Activated naive CD4-positive, alpha-beta T cell treated with anti-CD3 and anti-CD28 coated beads for 36 hours (primary cell): ENCODE measurements at regions of chr18 and their contacts with region 1.

Region 1: GRCh38 chr18:3771121-3771971 is 321.4 kb downstream of the TGIF1 start:
- DNase-seq: peak; percentile 88
- H3K4me3 Mint-ChIP-seq: peak overlapping the region; percentile 55
- H3K27ac Mint-ChIP-seq: no peak overlapping the region
- H3K4me1 Mint-ChIP-seq: peaks cover 6% of the 10 kb centered on the region
- H3K27me3 Mint-ChIP-seq: peaks cover 28% of the 10 kb centered on the region

Region 2: DNA sequence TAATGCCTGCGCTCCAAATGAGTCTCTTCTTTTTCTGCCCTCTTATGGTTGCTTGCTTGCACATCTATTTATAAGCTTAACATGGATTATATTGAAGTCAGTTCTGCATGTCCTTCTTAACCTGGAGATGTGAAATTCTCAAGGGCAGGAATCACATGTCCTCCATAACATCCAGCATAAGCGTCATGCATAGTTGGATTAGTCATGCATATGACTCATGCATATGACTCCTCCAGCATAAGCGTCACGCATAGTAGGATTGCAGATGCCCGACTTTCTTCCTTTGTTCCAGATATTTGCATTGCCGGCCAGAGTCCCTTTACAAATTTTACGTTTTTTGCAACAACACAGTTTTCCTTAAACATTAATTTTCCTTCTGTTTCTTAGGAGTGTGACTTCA is 12.8 kb before region 1 on chr18:
- CTCF ChIA-PET with region 1: interaction called, 10 read pairs
- intact Hi-C with region 1: no loop called
- DNase-seq: no peak
- H3K4me3 Mint-ChIP-seq: no peak overlapping the region
- H3K27ac Mint-ChIP-seq: no peak overlapping the region
- H3K4me1 Mint-ChIP-seq: no peaks in the 10 kb centered on the region
- H3K27me3 Mint-ChIP-seq: peaks cover under 1% of the 10 kb centered on the region

Region 3: DNA sequence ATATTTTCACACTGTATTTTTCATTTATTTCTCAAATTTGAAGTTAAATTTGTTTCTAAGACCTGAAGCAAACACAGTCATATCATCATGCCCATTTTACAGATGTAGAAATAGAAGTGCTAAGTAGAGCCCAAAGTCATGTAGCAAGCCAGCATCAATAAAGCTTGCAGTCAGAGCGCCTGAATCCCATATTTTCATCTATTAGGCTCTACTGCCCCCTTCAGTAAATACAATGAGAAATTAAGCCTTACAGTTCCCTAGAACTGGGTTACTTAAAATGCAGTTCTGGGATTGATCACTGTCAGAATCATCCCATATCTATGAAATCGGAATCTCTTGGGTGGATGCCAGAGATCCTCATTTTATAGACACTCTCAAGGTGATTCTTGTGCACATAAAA is 98.5 kb after region 1 on chr18:
- CTCF ChIA-PET with region 1: interaction called, 31 read pairs
- intact Hi-C with region 1: loop called (anchors 1 kb)
- DNase-seq: no peak
- H3K4me3 Mint-ChIP-seq: no peak overlapping the region
- H3K27ac Mint-ChIP-seq: no peak overlapping the region
- H3K4me1 Mint-ChIP-seq: no peaks in the 10 kb centered on the region
- H3K27me3 Mint-ChIP-seq: peaks cover 16% of the 10 kb centered on the region

Region 4: DNA sequence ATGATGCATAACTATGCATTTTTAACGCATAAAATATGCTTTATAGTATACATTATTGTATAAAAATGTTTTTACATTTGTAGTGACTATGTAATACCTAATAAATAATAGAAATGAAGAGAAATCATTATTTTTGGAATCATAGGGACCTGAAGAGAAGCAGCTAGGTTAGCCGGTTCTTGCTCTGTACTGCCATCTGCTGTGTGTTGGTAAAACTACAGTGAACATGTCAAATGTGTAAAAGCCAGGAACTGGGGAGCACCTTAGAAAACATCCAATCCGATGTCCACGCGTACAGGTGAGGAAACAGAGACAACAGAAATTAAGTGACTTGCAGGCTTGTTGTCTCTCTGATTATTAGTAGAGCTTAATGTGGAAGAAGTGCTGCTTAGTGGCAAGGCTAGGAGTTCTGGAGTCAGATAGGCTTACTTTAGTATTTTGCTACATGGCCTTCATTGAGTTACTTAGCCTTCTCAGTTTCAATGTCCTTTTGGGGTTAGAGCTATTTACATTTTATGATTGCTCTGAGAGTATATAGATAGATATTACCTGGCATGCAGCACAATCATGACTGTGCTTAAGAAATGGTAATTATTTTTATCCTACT is 297.3 kb after region 1 on chr18:
- CTCF ChIA-PET with region 1: interaction called, 13 read pairs
- intact Hi-C with region 1: loop called (anchors 1 kb)
- DNase-seq: peak; percentile 53
- H3K4me3 Mint-ChIP-seq: no peak overlapping the region
- H3K27ac Mint-ChIP-seq: no peak overlapping the region
- H3K4me1 Mint-ChIP-seq: no peaks in the 10 kb centered on the region
- H3K27me3 Mint-ChIP-seq: peaks cover 9% of the 10 kb centered on the region